ENCODE measurements at regions of chr2 and their contacts with region 1.

Region 1: DNA sequence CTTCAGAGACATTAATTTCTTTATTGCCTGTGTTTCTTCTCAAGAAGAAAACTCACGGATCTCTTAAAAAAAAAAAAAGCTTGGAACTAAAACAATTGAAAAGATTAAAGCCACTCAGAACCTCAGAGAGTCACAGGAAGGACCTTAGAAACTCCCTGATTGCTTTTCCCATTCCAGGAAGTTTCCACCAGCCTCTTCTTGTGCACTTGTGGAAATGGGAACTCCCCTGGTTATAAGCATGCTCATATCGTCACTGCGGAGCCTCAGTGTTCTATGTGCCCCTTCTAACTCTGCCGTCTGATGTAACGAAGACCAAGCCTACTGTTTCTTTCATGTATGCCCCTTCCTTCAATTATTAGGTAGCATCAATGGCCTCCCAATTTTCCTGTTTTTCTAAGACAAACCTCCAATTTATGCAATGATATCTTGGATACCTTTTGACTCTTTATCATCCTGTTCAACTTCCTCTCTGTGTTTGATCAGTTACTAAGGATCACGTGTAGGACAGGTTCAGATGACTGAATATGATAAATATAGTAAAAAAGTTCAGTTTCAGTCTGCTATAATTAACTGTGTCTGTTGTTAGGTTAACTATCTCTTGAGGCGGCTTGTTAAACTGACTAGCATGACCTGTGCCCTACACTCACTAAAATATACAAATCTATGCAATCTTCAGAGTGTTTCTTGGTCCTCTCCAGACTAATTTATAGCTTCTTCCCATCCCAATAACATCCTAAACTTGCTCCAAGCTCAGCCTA is 593.7 kb upstream of the CHAC2 start:
- DNase-seq: no peak
- ATAC-seq: no peak
- H3K4me3 ChIP-seq: no peak overlapping the region
- H3K4me3 Mint-ChIP-seq: no peak overlapping the region
- H3K27ac ChIP-seq: no peak overlapping the region
- H3K27ac Mint-ChIP-seq: no peak overlapping the region
- H3K4me1 ChIP-seq: no peaks in the 10 kb centered on the region
- H3K4me1 Mint-ChIP-seq: no peaks in the 10 kb centered on the region
- H3K27me3 ChIP-seq: no peaks in the 10 kb centered on the region
- H3K27me3 Mint-ChIP-seq: no peaks in the 10 kb centered on the region

Region 2: GRCh38 chr2:53202063-53202462 is 28.2 kb after region 1 on chr2:
- CTCF ChIA-PET with region 1: interaction called in 1 of 2 experiments, 3 read pairs
- POLR2A ChIA-PET with region 1: interaction called in 1 of 2 experiments, 14 read pairs
- DNase-seq: no peak
- ATAC-seq: no peak
- H3K4me3 ChIP-seq: no peak overlapping the region
- H3K4me3 Mint-ChIP-seq: no peak overlapping the region
- H3K27ac ChIP-seq: no peak overlapping the region
- H3K27ac Mint-ChIP-seq: no peak overlapping the region
- H3K4me1 ChIP-seq: no peaks in the 10 kb centered on the region
- H3K4me1 Mint-ChIP-seq: no peaks in the 10 kb centered on the region
- H3K27me3 ChIP-seq: no peaks in the 10 kb centered on the region
- H3K27me3 Mint-ChIP-seq: no peaks in the 10 kb centered on the region